BJ (cell line): ENCODE measurements at regions of chr2 and their contacts with region 1.

Region 1: GRCh38 chr2:20015472-20016083 is 3.1 kb upstream of the MATN3 start:
- DNase-seq: no peak
- H3K4me3 ChIP-seq: no peak overlapping the region
- H3K27me3 ChIP-seq: peaks cover 4% of the 10 kb centered on the region
- CTCF ChIP-seq: peak; percentile 50

Region 2: GRCh38 chr2:19786408-19787058 is 229.0 kb before region 1 on chr2:
- CTCF ChIA-PET with region 1: no interaction called
- POLR2A ChIA-PET with region 1: no interaction called
- DNase-seq: no peak
- H3K4me3 ChIP-seq: no peak overlapping the region
- H3K27me3 ChIP-seq: no peaks in the 10 kb centered on the region; the same call in 1 of the 2 replicates
- CTCF ChIP-seq: no peak

Region 3: GRCh38 chr2:20001361-20001863 is 14.2 kb before region 1 on chr2:
- CTCF ChIA-PET with region 1: interaction called, 25 read pairs
- POLR2A ChIA-PET with region 1: no interaction called
- DNase-seq: no peak
- H3K4me3 ChIP-seq: no peak overlapping the region
- H3K27me3 ChIP-seq: no peaks in the 10 kb centered on the region; the same call in 1 of the 2 replicates
- CTCF ChIP-seq: no peak

Region 4: GRCh38 chr2:20033341-20033740 is 17.8 kb after region 1 on chr2:
- CTCF ChIA-PET with region 1: interaction called, 18 read pairs
- POLR2A ChIA-PET with region 1: no interaction called
- DNase-seq: no peak
- H3K4me3 ChIP-seq: no peak overlapping the region
- H3K27me3 ChIP-seq: no peaks in the 10 kb centered on the region
- CTCF ChIP-seq: no peak

Region 5: GRCh38 chr2:20051532-20052228 is 36.1 kb after region 1 on chr2 and contains the start of gene LAPTM4A:
- CTCF ChIA-PET with region 1: interaction called, 18 read pairs
- POLR2A ChIA-PET with region 1: interaction called, 4 read pairs
- DNase-seq: peak; percentile 99
- H3K4me3 ChIP-seq: peak within 1 kb of the TSS; percentile 95
- H3K27me3 ChIP-seq: no peaks in the 10 kb centered on the region
- CTCF ChIP-seq: no peak
- polyA plus RNA-seq, gene LAPTM4A: 379 and 855 TPM in 2 replicates

Region 6: GRCh38 chr2:20097879-20098714 is 82.5 kb after region 1 on chr2:
- CTCF ChIA-PET with region 1: interaction called, 157 read pairs
- POLR2A ChIA-PET with region 1: no interaction called
- DNase-seq: no peak
- H3K4me3 ChIP-seq: no peak overlapping the region
- H3K27me3 ChIP-seq: no peaks in the 10 kb centered on the region; the same call in 1 of the 2 replicates
- CTCF ChIP-seq: peak; percentile 93